Activated CD4-positive, alpha-beta memory T cell treated with anti-CD3 and anti-CD28 coated beads, Interleukin-2, amount 10 ng/mL, durations not matched to agents 7 days and 5 days (primary cell): ENCODE measurements at regions of chr22 and their contacts with region 1.

Region 1: DNA sequence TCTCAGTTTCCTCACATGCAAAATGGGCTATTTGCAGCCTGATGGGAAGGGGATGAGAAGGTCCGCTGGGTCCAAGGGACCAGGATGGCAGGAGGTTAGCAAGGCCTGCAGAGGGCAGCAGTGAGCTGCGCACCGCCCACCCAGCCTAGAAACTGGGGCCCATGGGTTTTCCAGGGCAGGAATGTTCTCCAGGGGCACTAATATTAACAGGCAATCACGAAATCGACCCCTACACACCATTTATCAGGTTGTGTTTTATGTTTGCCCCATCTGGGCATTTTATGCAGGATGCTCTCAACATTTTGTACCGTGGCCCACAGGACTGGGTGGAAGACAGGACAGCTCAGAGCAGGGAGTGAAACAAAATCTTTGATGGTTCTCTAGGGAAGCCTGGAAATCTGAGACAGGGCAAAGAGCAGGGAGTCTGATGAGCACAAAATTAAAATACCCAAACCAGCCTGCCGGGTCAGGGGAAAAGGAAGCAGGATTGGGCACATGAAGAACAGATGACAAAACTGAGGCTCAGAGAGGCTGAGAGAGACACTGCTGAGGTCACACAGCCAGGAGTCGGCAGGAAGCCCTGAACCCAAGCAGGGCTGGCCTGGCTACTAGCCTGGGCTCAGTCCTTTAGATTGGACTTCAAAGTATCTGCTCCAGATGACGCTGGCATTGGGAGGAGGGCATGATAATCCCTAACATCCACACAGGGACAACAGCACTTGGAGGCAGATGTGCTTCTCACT is 1.6 kb upstream of the BCR start:
- DNase-seq: peak; percentile 64
- H3K4me3 Mint-ChIP-seq: no peak overlapping the region
- H3K27ac Mint-ChIP-seq: peak overlapping the region; percentile 18
- H3K4me1 Mint-ChIP-seq: peaks cover 63% of the 10 kb centered on the region
- H3K27me3 Mint-ChIP-seq: peaks cover 2% of the 10 kb centered on the region

Region 2: GRCh38 chr22:23281406-23282088 is 102.9 kb after region 1 on chr22:
- CTCF ChIA-PET with region 1: interaction called, 272 read pairs
- POLR2A ChIA-PET with region 1: interaction called, 7 read pairs
- DNase-seq: peak; percentile 82
- H3K4me3 Mint-ChIP-seq: no peak overlapping the region
- H3K27ac Mint-ChIP-seq: no peak overlapping the region
- H3K4me1 Mint-ChIP-seq: peaks cover 40% of the 10 kb centered on the region
- H3K27me3 Mint-ChIP-seq: no peaks in the 10 kb centered on the region